ENCODE measurements at regions of chr4 and their contacts with region 1.

Region 1: GRCh38 chr4:109702950-109703663 is at the start of gene CASP6:
- DNase-seq: peak; percentile 41
- ATAC-seq: peak; percentile 90
- H3K4me3 ChIP-seq: peak within 1 kb of the TSS; percentile 96
- H3K27ac ChIP-seq: peak within 1 kb of the TSS; percentile 71
- H3K4me1 ChIP-seq: peaks cover 15% of the 10 kb centered on the region
- H3K27me3 ChIP-seq: no peaks in the 10 kb centered on the region
- CTCF ChIP-seq: peak; percentile 59 to 79 (median 70)
- EP300 ChIP-seq: 0 out of 4 replicates have a peak, but pooled peaks have one; percentile 6 to 15
- POLR2A ChIP-seq: peak; percentile 73
- RAD21 ChIP-seq: peak; percentile 57
- polyA plus RNA-seq, gene CASP6: 20.0 to 23.2 TPM

Region 2: GRCh38 chr4:108540536-108540935 is 1162.6 kb before region 1 on chr4:
- CTCF ChIA-PET with region 1: no interaction called
- POLR2A ChIA-PET with region 1: no interaction called
- RAD21 ChIA-PET with region 1: no interaction called
- SMC1A ChIA-PET with region 1: no interaction called
- in situ Hi-C with region 1: no loop called
- intact Hi-C with region 1: no loop called
- DNase-seq: no peak
- ATAC-seq: no peak
- H3K4me3 ChIP-seq: no peak overlapping the region
- H3K27ac ChIP-seq: no peak overlapping the region
- H3K4me1 ChIP-seq: no peaks in the 10 kb centered on the region
- H3K27me3 ChIP-seq: no peaks in the 10 kb centered on the region
- CTCF ChIP-seq: no peak
- EP300 ChIP-seq: no peak
- POLR2A ChIP-seq: no peak
- RAD21 ChIP-seq: no peak

Region 3: DNA sequence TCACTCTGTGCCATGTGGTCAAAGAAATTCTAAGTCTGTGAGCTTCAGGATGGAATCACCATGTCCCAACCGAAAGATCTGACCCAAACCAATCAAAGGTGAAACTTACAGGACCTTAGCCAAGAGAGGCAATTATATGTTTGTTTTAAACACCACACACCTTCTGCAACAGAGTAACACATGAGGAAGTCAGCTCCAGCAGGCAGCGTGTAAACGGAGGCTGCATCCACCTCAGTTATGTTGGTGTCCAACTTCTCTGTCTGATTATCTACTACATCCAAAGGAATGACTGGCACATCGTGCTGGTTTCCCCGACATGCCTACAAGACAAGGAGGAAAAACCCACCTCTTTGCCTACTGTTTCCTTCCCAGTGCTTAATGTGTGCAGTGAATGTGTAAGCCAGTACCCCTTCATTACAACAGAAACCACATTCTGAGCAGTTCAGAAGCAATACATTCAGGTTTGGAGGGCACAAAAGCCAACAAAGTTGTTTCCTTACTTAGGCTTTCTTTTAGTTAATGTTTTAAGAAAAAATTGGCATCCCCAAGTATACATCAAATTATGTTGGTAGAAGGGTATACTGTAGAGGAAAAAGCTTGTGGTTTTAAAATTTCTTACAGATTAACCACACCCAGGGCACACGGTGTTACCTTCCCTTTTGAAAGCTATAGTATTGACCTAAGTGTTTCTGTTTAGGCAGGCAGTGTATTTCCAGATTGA is 12.3 kb before region 1 on chr4:
- CTCF ChIA-PET with region 1: interaction called, 11 read pairs
- POLR2A ChIA-PET with region 1: interaction called, 13 read pairs
- RAD21 ChIA-PET with region 1: no interaction called
- SMC1A ChIA-PET with region 1: interaction called, 18 read pairs
- in situ Hi-C with region 1: no loop called
- intact Hi-C with region 1: no loop called
- DNase-seq: peak; percentile 31
- ATAC-seq: peak; percentile 93
- H3K4me3 ChIP-seq: no peak overlapping the region
- H3K27ac ChIP-seq: no peak overlapping the region; the same call in 1 of the 2 replicates
- H3K4me1 ChIP-seq: peaks cover 4% of the 10 kb centered on the region; the same call in 1 of the 2 replicates
- H3K27me3 ChIP-seq: no peaks in the 10 kb centered on the region
- CTCF ChIP-seq: no peak
- EP300 ChIP-seq: no peak
- POLR2A ChIP-seq: no peak
- RAD21 ChIP-seq: no peak

Region 4: GRCh38 chr4:109729718-109730618 is 26.9 kb after region 1 on chr4 and contains the start of gene PLA2G12A:
- CTCF ChIA-PET with region 1: interaction called, 5 read pairs
- POLR2A ChIA-PET with region 1: interaction called, 13 read pairs
- RAD21 ChIA-PET with region 1: interaction called, 6 read pairs
- SMC1A ChIA-PET with region 1: interaction called, 27 read pairs
- in situ Hi-C with region 1: no loop called
- intact Hi-C with region 1: no loop called
- DNase-seq: peak; percentile 16
- ATAC-seq: peak; percentile 93
- H3K4me3 ChIP-seq: peak within 1 kb of the TSS; percentile 91
- H3K27ac ChIP-seq: peak within 1 kb of the TSS; percentile 64
- H3K4me1 ChIP-seq: no peaks in the 10 kb centered on the region
- H3K27me3 ChIP-seq: no peaks in the 10 kb centered on the region
- CTCF ChIP-seq: no peak
- EP300 ChIP-seq: no peak
- POLR2A ChIP-seq: peak; percentile 75
- RAD21 ChIP-seq: no peak
- polyA plus RNA-seq, gene PLA2G12A: 3.7 to 6.2 TPM

Region 5: DNA sequence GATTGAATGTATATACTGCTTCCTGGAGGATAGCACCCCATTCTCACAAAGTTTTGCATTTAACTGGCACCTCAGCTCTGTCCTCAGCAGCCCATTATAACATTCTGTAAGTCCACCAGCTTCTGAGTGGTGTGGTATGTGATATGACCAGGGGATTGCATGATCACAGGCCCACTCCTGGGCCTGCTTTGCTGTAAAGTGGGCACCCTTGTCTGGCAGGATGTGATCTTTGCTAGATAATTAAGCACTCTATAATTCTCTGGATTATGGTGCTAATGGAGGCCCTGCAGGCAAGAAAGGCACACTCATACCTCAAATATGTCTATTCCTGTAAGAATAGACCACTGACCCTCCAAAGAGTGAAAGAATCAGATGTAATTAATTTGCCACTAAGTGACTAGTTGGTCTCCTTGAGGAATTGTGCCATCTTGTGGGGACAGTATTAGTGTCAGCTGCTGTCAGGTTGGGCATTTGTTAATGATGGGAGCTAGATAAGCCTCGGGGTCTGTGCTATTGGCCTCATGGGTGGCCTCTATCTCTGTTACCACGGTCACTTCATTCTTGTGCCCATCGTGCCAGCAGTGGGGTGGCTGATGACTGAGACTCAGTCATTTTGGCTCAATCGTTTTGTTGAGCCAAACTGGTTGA is 100.9 kb after region 1 on chr4:
- CTCF ChIA-PET with region 1: interaction called, 5 read pairs
- POLR2A ChIA-PET with region 1: no interaction called
- RAD21 ChIA-PET with region 1: interaction called, 6 read pairs
- SMC1A ChIA-PET with region 1: interaction called, 5 read pairs
- in situ Hi-C with region 1: no loop called
- intact Hi-C with region 1: loop called (anchors 1 kb)
- DNase-seq: peak; percentile 7
- ATAC-seq: peak; percentile 94
- H3K4me3 ChIP-seq: no peak overlapping the region
- H3K27ac ChIP-seq: no peak overlapping the region
- H3K4me1 ChIP-seq: no peaks in the 10 kb centered on the region
- H3K27me3 ChIP-seq: peaks cover 0 to 2% of the 10 kb centered on the region in 2 experiments; a peak in 1 of 4 replicates
- CTCF ChIP-seq: peak; percentile 50 to 67 (median 53); a peak in 5 of 6 replicates
- EP300 ChIP-seq: no peak
- POLR2A ChIP-seq: no peak
- RAD21 ChIP-seq: peak; percentile 70

Region 6: GRCh38 chr4:109815151-109816081 is 112.3 kb after region 1 on chr4 and contains the start of gene GAR1:
- CTCF ChIA-PET with region 1: interaction called, 4 read pairs
- POLR2A ChIA-PET with region 1: no interaction called
- RAD21 ChIA-PET with region 1: interaction called, 3 read pairs
- SMC1A ChIA-PET with region 1: interaction called, 4 read pairs
- in situ Hi-C with region 1: no loop called
- intact Hi-C with region 1: loop called (anchors 1 kb)
- DNase-seq: peak; percentile 72
- ATAC-seq: peak; percentile 94
- H3K4me3 ChIP-seq: peak within 1 kb of the TSS; percentile 96
- H3K27ac ChIP-seq: peak within 1 kb of the TSS; percentile 91
- H3K4me1 ChIP-seq: no peaks in the 10 kb centered on the region
- H3K27me3 ChIP-seq: no peaks in the 10 kb centered on the region
- CTCF ChIP-seq: 0 out of 6 replicates have a peak, but pooled peaks of 1 of the 3 experiments have one; percentile 2
- EP300 ChIP-seq: peak in 1 of 2 experiments; percentile 19; a peak in 1 of 4 replicates
- POLR2A ChIP-seq: peak; percentile 81; the same call in 1 of the 2 replicates
- RAD21 ChIP-seq: no peak
- polyA plus RNA-seq, gene GAR1: 16.6 to 20.5 TPM

Region 7: DNA sequence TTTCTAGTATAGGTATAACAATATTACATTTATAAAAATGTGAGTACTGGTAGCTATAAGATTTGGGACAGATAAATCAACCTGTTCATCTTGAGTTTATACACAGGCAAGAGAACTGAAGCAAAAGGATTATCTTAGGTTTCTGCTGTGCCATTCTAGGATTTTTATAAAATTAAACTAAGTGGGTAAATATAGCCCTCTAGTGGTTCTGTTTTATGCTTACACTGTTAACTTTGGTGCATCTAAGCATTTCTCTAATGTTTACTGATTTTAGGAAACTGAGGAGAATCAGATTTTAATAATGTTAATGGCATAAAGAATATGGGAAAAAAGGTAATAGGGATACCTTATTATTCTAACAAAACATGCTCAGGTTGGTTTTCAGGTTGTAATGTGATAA is 123.6 kb after region 1 on chr4:
- CTCF ChIA-PET with region 1: interaction called, 9 read pairs
- POLR2A ChIA-PET with region 1: no interaction called
- RAD21 ChIA-PET with region 1: no interaction called
- SMC1A ChIA-PET with region 1: interaction called, 12 read pairs
- in situ Hi-C with region 1: no loop called
- intact Hi-C with region 1: no loop called
- DNase-seq: no peak
- ATAC-seq: peak; percentile 80
- H3K4me3 ChIP-seq: no peak overlapping the region
- H3K27ac ChIP-seq: no peak overlapping the region
- H3K4me1 ChIP-seq: no peaks in the 10 kb centered on the region
- H3K27me3 ChIP-seq: no peaks in the 10 kb centered on the region
- CTCF ChIP-seq: peak; percentile 22 to 54 (median 40); a peak in 4 of 6 replicates
- EP300 ChIP-seq: no peak
- POLR2A ChIP-seq: no peak
- RAD21 ChIP-seq: peak; percentile 69

Region 8: GRCh38 chr4:109977854-109978501 is 274.9 kb after region 1 on chr4:
- CTCF ChIA-PET with region 1: interaction called, 4 read pairs
- POLR2A ChIA-PET with region 1: no interaction called
- RAD21 ChIA-PET with region 1: no interaction called
- SMC1A ChIA-PET with region 1: no interaction called
- in situ Hi-C with region 1: no loop called
- intact Hi-C with region 1: loop called (anchors 10 kb)
- DNase-seq: no peak
- ATAC-seq: peak; percentile 64
- H3K4me3 ChIP-seq: no peak overlapping the region
- H3K27ac ChIP-seq: no peak overlapping the region
- H3K4me1 ChIP-seq: no peaks in the 10 kb centered on the region
- H3K27me3 ChIP-seq: peaks cover 0 to 2% of the 10 kb centered on the region in 2 experiments; a peak in 3 of 4 replicates
- CTCF ChIP-seq: peak; percentile 20 to 48 (median 28); a peak in 4 of 6 replicates
- EP300 ChIP-seq: no peak
- POLR2A ChIP-seq: no peak
- RAD21 ChIP-seq: peak; percentile 58

Measured in GM12878 (cell line).